Calu3 (cell line): ENCODE measurements at regions of chr9 and their contacts with region 1.

Region 1: GRCh38 chr9:34633851-34634550 is 3.6 kb downstream of the SIGMAR1 start:
- DNase-seq: peak; percentile 70
- H3K4me3 Mint-ChIP-seq: no peak overlapping the region
- H3K27ac Mint-ChIP-seq: no peak overlapping the region
- H3K4me1 Mint-ChIP-seq: peaks cover 10% of the 10 kb centered on the region
- H3K27me3 Mint-ChIP-seq: peaks cover 22% of the 10 kb centered on the region
- CTCF ChIP-seq: peak; percentile 48

Region 2: GRCh38 chr9:34611829-34612630 is 22.0 kb before region 1 on chr9 and contains the start of gene RPP25L:
- CTCF ChIA-PET with region 1: interaction called, 3 read pairs
- intact Hi-C with region 1: loop called (anchors 1 kb)
- DNase-seq: peak; percentile 84
- H3K4me3 Mint-ChIP-seq: peak within 1 kb of the TSS; percentile 86
- H3K27ac Mint-ChIP-seq: peak within 1 kb of the TSS; percentile 79
- H3K4me1 Mint-ChIP-seq: no peaks in the 10 kb centered on the region
- H3K27me3 Mint-ChIP-seq: no peaks in the 10 kb centered on the region
- CTCF ChIP-seq: no peak
- total RNA-seq, gene RPP25L: 17.6 and 19.9 TPM in 2 replicates